PC-9 (cell line): ENCODE measurements at regions of chr4 and their contacts with region 1.

Region 1: GRCh38 chr4:150923945-150924344 is 91.1 kb downstream of the LRBA start:
- DNase-seq: no peak
- H3K4me3 ChIP-seq: no peak overlapping the region
- H3K27ac ChIP-seq: no peak overlapping the region
- H3K4me1 ChIP-seq: no peaks in the 10 kb centered on the region
- H3K27me3 ChIP-seq: no peaks in the 10 kb centered on the region
- CTCF ChIP-seq: no peak

Region 2: GRCh38 chr4:151004222-151004621 is 80.3 kb after region 1 on chr4:
- CTCF ChIA-PET with region 1: no interaction called
- POLR2A ChIA-PET with region 1: no interaction called
- intact Hi-C with region 1: loop called (anchors 5 kb)
- DNase-seq: no peak
- H3K4me3 ChIP-seq: no peak overlapping the region
- H3K27ac ChIP-seq: no peak overlapping the region
- H3K4me1 ChIP-seq: no peaks in the 10 kb centered on the region
- H3K27me3 ChIP-seq: no peaks in the 10 kb centered on the region
- CTCF ChIP-seq: no peak